ENCODE measurements at regions of chr1 and their contacts with region 1.

Region 1: GRCh38 chr1:48061162-48062136 is 64.3 kb upstream of the TRABD2B start:
- H3K4me3 ChIP-seq: no peak overlapping the region
- H3K27ac ChIP-seq: no peak overlapping the region
- H3K4me1 ChIP-seq: no peaks in the 10 kb centered on the region
- CTCF ChIP-seq: no peak; the same call in 1 of the 2 replicates

Region 2: GRCh38 chr1:47738560-47739182 is 322.8 kb before region 1 on chr1:
- CTCF ChIA-PET with region 1: interaction called, 13 read pairs
- POLR2A ChIA-PET with region 1: no interaction called
- H3K4me3 ChIP-seq: no peak overlapping the region
- H3K27ac ChIP-seq: no peak overlapping the region
- H3K4me1 ChIP-seq: no peaks in the 10 kb centered on the region
- CTCF ChIP-seq: no peak

Region 3: DNA sequence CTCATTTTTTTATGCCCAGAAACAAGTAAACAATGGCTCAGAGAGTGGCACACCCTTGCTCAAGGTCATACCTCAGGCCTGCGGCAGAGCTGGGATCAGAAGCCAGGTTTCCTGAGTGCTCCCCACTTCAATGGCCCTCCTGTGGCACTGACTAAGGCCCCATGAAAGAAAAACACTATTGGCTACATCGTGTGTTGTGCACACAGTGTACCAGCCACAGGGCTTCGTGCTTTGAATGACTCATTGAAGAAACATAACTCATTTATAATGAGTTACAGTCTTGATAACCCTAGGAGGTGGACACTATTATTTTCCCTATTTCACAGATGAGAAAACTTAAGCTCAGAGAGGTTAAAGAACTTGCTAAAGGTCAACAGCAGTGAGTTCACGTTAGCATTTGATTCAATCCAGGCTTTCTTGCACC is 155.4 kb before region 1 on chr1:
- CTCF ChIA-PET with region 1: no interaction called
- POLR2A ChIA-PET with region 1: no interaction called
- H3K4me3 ChIP-seq: no peak overlapping the region
- H3K27ac ChIP-seq: no peak overlapping the region
- H3K4me1 ChIP-seq: no peaks in the 10 kb centered on the region
- CTCF ChIP-seq: no peak

Region 4: GRCh38 chr1:47997289-47998200 is 63.9 kb before region 1 on chr1 and contains the start of gene TRABD2B:
- CTCF ChIA-PET with region 1: interaction called, 151 read pairs
- POLR2A ChIA-PET with region 1: no interaction called
- H3K4me3 ChIP-seq: peak within 1 kb of the TSS; percentile 53
- H3K27ac ChIP-seq: peak within 1 kb of the TSS; percentile 81; the same call in 1 of the 2 replicates
- H3K4me1 ChIP-seq: peaks cover 11% of the 10 kb centered on the region
- CTCF ChIP-seq: peak; percentile 98

Region 5: GRCh38 chr1:48036710-48037355 is 24.6 kb before region 1 on chr1:
- CTCF ChIA-PET with region 1: interaction called, 39 read pairs
- POLR2A ChIA-PET with region 1: interaction called, 3 read pairs
- H3K4me3 ChIP-seq: no peak overlapping the region
- H3K27ac ChIP-seq: no peak overlapping the region
- H3K4me1 ChIP-seq: peaks cover 12% of the 10 kb centered on the region
- CTCF ChIP-seq: no peak

Region 6: DNA sequence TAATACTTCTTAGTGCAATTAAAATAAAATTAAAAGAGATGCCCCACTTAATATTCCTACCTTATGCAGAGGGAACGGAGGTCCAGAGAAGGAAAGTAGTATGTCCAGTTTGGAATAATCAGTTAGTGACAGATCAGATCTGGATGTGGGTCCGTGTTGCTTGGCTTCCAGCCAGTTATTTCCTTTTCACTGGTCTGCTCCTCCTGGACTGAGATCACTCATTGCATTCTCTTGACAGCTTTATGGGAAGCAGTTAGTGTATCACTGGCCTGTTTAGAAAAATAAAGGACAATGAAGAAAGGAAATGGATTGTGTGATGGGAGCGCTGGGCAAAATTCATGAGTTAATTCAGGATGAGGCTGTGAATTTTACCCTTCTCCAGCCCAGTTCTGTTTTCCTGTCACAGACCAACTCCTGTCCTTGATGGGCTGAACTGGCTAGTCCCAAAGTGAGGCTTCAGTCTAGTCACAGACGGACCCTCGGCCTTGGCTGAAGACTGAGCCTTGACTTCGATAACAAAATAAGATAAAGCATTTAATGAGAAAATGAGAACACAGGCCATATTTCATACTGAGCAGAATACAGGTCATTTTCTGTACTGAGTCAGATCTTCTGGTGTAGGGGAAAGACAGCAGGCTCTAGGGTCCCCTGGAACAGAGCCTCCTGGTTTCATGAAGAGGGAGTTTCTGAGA is 21.0 kb after region 1 on chr1:
- CTCF ChIA-PET with region 1: interaction called, 22 read pairs
- POLR2A ChIA-PET with region 1: interaction called, 3 read pairs
- H3K4me3 ChIP-seq: no peak overlapping the region
- H3K27ac ChIP-seq: peak overlapping the region; percentile 67
- H3K4me1 ChIP-seq: peaks cover 24% of the 10 kb centered on the region
- CTCF ChIP-seq: no peak

Region 7: DNA sequence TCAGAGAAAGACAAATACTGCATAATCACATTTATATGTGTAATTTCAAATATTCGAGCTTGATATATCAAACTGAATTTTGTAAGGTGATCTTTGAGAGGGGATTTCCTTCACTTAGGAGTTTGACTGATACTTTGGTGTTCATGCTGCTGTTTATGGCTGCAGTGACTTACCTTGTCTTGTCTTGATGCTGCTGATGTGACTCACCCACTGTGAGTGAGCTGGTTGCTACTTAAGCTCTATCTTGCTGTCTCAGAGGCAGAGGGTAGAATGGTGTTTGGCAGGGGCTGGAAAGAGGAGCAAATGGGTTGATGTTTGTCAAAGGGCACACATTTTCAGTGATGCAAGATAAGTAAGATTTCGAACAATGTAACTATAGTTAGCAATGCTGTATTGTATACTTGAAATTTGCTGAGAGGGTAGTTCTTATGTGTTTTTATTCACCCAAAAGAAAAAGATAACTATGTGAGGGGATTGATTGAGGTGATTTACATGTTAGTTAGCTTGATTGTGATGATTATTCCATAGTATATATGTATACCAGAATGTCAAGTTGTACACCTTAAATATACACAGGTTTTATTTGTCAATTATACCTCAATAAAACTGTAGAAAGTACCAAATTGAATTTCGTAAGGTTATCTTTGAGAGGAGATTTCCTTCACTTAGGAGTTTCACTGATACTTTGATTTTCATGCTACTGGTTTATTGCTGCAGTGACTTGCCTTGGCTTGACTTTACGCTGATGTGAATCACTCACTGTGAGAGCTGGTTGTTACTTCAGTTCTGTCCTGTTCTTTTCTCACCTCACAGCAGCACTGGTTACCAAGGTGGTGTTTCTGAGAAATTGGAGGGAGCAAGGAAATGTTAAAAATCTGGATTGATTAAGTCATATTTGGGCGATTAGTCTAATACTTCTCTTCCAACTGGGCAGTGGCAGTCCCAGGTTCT is 66.6 kb after region 1 on chr1:
- CTCF ChIA-PET with region 1: no interaction called
- POLR2A ChIA-PET with region 1: no interaction called
- H3K4me3 ChIP-seq: no peak overlapping the region
- H3K27ac ChIP-seq: no peak overlapping the region
- H3K4me1 ChIP-seq: no peaks in the 10 kb centered on the region
- CTCF ChIP-seq: no peak

Region 8: DNA sequence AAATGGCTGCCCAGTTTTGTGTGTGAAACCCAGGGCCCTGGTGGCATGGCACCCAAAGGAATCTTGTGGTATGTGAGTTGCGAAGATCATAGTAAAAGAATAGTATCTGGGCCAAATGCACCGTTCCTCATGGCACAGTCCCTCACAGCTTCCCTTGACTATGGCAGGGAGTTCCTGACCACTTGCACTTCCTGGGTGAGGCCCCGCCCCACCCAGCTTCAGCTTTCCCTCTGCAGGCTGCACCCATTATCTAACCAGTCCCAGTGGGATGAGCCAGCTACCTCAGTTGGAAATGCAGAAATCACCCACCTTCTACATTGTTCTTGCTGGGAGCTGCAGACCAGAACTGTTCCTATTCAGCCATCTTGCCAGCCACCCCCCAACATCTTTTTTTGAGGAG is 224.1 kb after region 1 on chr1:
- CTCF ChIA-PET with region 1: no interaction called
- POLR2A ChIA-PET with region 1: no interaction called
- H3K4me3 ChIP-seq: no peak overlapping the region
- H3K27ac ChIP-seq: no peak overlapping the region
- H3K4me1 ChIP-seq: no peaks in the 10 kb centered on the region
- CTCF ChIP-seq: no peak

Measured in HEK293 (cell line).